ENCODE measurements at regions of chr1 and their contacts with region 1.

Region 1: DNA sequence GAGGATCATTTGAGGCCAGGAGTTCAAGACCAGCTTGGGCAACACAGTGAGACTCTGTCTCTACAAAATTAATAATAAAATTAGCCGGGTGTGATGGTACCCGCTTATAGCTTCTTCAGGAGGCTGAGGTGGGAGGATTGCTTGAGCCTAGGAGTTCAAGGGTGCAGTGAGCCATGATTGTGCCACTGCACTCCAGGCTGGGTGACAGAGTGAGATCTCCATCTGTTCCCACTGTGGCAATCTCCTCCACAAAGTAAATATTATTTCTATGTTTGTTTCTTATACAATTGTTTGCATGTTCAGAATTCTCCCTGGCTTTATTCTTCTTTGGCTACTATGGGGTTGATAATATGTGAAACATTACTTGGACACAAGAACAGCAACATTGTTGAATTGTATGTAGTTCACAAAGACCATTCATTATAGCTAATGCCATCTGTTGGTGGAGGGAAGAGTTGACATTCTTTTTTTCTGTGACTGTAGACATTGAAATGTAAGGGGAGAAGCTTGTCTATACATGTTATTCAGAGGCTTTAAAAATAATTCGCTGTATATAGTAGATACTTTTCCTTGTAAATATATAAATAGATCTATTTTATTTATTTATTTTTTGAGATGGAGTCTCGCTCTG is 47.8 kb upstream of the SRSF10 start:
- DNase-seq: no peak
- ATAC-seq: peak in 7 of 8 donors; percentile 60 to 83 (median 75)
- H3K4me3 ChIP-seq: no peak overlapping the region
- H3K27ac ChIP-seq: no peak overlapping the region
- H3K4me1 ChIP-seq: peaks cover 0 to 10% (median 0%) of the 10 kb centered on the region in 9 donors
- H3K27me3 ChIP-seq: no peaks in the 10 kb centered on the region
- CTCF ChIP-seq: peak; percentile 53 to 85 (median 64)

Region 2: DNA sequence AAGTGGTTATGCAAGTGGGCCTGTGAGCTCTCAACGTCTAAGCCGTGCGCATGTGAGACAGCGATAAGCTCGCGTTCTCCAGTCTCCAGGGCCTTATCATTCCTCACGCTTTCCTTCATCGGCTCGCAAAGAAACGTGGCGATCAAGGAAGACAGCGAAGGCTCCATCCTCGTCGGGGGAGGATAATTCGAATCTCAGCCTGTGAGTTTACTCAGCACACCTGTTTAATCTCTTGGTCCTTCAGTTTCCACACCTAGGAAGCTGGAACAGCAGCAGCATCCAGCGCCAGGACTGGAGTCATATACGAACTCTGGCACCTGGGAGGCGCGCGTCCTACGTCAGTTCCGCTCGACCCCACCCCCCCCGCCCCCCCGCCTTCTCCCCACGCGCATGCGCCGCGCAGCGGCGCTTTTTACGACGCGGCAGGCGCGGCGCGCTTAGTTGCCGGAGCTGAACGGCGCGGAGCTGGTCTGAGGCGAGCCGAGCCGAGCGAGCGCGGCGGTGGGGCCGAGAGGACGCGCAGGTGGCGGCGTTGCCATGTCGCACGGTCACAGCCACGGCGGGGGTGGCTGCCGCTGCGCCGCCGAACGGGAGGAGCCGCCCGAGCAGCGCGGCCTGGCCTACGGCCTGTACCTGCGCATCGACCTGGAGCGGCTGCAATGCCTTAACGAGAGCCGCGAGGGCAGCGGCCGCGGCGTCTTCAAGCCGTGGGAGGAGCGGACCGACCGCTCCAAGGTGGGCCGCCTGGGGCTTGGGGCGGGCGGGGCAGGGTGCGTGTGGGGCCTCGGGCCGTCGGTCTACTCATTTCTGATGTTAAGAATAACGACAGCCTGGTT is 249.8 kb before region 1 on chr1 and contains the start of gene PITHD1:
- intact Hi-C with region 1: loop called in 1 of 10 experiments (anchors 10 kb)
- DNase-seq: peak; percentile 78 to 81
- ATAC-seq: peak; percentile 86 to 94 (median 92)
- H3K4me3 ChIP-seq: peak within 1 kb of the TSS; percentile 74 to 100 (median 91)
- H3K27ac ChIP-seq: peak within 1 kb of the TSS; percentile 44 to 94 (median 90)
- H3K4me1 ChIP-seq: peaks cover 9 to 45% (median 29%) of the 10 kb centered on the region in 9 donors
- H3K27me3 ChIP-seq: no peaks in the 10 kb centered on the region
- CTCF ChIP-seq: no peak
- total RNA-seq, gene PITHD1: 37.6 to 52.8 (median 43.3) TPM

Region 3: DNA sequence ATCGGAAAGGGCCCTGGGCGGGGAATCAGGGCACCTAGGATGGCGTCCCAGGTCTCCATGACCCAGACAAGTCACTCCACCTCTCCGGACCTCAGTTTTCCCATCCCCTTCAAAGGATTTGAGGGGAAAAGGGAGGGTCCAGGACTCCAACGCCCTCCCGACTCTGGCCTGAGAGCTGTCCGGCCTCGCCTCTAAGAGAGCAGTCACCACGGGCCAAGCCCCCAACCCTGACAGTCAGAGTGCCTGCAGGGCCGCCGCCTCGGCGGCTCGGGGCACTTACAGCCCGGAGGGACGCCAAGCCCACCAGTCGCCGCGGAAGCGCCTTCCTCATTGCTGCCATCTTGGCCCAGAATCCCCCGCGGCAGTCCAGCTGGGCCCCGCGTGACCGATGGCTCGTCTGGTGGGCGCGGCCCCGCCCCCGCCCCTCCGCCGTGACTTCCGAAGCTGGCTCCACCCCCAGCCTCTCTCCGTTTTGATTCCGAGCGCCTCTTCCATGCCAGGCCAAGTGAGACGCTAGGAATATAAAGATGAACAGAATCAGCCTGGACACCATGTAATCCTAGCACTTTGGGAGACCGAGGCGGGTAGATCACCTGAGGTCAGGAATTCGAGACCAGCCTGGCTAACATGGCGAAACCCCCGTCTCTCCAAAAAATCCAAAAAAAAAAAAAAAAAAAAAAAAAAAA is 202.7 kb before region 1 on chr1 and contains the start of gene HMGCL:
- intact Hi-C with region 1: loop called in 1 of 10 experiments (anchors 10 kb)
- DNase-seq: peak; percentile 90 to 93
- ATAC-seq: peak; percentile 98 to 100 (median 99)
- H3K4me3 ChIP-seq: peak within 1 kb of the TSS; percentile 74 to 99 (median 92)
- H3K27ac ChIP-seq: peak within 1 kb of the TSS; percentile 87 to 99 (median 96)
- H3K4me1 ChIP-seq: peaks cover 2 to 22% (median 14%) of the 10 kb centered on the region in 9 donors
- H3K27me3 ChIP-seq: no peaks in the 10 kb centered on the region
- CTCF ChIP-seq: no peak
- total RNA-seq, gene HMGCL: 27.8 to 44.3 (median 40.1) TPM

Region 4: DNA sequence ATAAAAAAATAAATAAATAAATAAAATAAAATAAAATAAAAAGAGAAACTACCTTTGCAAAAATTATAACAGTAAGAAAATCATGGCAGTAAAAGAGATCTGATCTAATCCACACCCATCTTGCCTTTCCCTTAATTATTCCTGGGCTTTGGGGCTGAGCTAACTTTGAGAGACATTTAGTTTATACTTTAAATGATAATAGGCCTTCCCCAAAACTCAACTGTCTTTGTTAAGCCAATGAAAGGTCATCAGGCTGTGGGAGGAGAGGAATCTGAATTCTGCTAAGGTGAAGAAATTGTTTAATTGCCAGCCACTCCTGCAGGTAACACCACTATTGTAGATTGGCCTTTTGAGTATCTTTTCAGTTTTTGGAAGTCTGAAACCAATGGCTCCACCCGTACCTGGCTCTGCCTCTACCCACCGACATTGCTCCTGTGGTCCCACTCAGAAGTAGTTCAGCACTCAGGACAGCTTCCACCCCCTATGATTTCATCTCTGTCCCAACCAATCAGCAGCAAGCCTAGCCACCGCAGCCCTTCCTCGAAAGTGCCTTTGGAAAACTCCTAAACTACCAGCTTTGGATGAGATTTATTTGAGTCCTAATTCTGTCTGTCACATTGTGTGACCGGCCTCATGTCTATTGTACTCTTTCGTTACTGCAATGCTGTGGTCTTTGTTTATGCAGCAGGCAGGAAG is 91.3 kb before region 1 on chr1:
- intact Hi-C with region 1: no loop called
- DNase-seq: no peak
- ATAC-seq: no peak
- H3K4me3 ChIP-seq: no peak overlapping the region
- H3K27ac ChIP-seq: no peak overlapping the region
- H3K4me1 ChIP-seq: peaks cover 0 to 3% (median 0%) of the 10 kb centered on the region in 9 donors
- H3K27me3 ChIP-seq: no peaks in the 10 kb centered on the region
- CTCF ChIP-seq: no peak

Region 5: GRCh38 chr1:23959041-23959460 is 68.9 kb before region 1 on chr1:
- intact Hi-C with region 1: loop called in 7 of 10 experiments (anchors 2 to 10 kb)
- DNase-seq: peak; percentile 73 to 92
- ATAC-seq: peak; percentile 76 to 87 (median 80)
- H3K4me3 ChIP-seq: peak overlapping the region; percentile 55 to 93 (median 74)
- H3K27ac ChIP-seq: peak overlapping the region; percentile 93 to 100 (median 98)
- H3K4me1 ChIP-seq: peaks cover 0 to 59% (median 34%) of the 10 kb centered on the region in 9 donors
- H3K27me3 ChIP-seq: no peaks in the 10 kb centered on the region
- CTCF ChIP-seq: peak in 7 of 9 donors; percentile 1 to 75 (median 45)

Region 6: GRCh38 chr1:23979878-23980724 is 47.9 kb before region 1 on chr1 and contains the start of gene SRSF10:
- intact Hi-C with region 1: loop called in 7 of 10 experiments (anchors 1 to 5 kb)
- DNase-seq: peak; percentile 98
- ATAC-seq: peak; percentile 99 to 100 (median 99)
- H3K4me3 ChIP-seq: peak within 1 kb of the TSS; percentile 64 to 96 (median 86)
- H3K27ac ChIP-seq: peak within 1 kb of the TSS; percentile 63 to 99 (median 96)
- H3K4me1 ChIP-seq: peaks cover 4 to 57% (median 49%) of the 10 kb centered on the region in 9 donors
- H3K27me3 ChIP-seq: no peaks in the 10 kb centered on the region
- CTCF ChIP-seq: peak in 8 of 9 donors; percentile 18 to 81 (median 35)
- total RNA-seq, gene SRSF10: 40.7 to 65.8 (median 52.8) TPM